Tibial artery (tissue), 4 donors: ENCODE measurements at regions of chr5 and their contacts with region 1.

Region 1: GRCh38 chr5:164610374-164610773 is 1105.0 kb downstream of the MAT2B start:
- DNase-seq: no peak
- H3K4me3 ChIP-seq: no peak overlapping the region
- H3K27ac ChIP-seq: no peak overlapping the region
- H3K4me1 ChIP-seq: no peaks in the 10 kb centered on the region
- H3K27me3 ChIP-seq: no peaks in the 10 kb centered on the region
- CTCF ChIP-seq: no peak

Region 2: DNA sequence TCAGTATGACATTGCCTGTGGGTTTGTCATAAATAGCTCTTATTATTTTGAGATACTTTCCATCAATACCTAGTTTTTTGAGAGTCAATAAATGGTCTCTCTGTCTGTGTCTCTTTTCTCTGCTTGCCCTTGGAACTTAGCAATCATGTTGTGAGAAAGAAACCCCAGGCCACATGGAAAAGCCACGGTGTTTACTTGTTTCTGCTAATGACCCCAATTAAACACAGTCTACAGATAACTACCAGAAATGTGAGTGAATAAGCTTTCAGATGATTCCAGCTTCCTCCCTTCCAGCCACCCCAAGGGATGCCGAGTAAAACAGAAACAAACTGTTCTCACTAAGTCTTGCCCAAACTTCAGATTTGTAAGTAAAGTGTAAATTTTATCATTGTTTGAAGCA is 520.0 kb before region 1 on chr5:
- intact Hi-C with region 1: no loop called
- DNase-seq: no peak
- H3K4me3 ChIP-seq: no peak overlapping the region
- H3K27ac ChIP-seq: no peak overlapping the region
- H3K4me1 ChIP-seq: no peaks in the 10 kb centered on the region
- H3K27me3 ChIP-seq: no peaks in the 10 kb centered on the region
- CTCF ChIP-seq: no peak

Region 3: GRCh38 chr5:166570812-166571211 is 1960.4 kb after region 1 on chr5:
- intact Hi-C with region 1: loop called (anchors 5 kb)
- DNase-seq: no peak
- H3K4me3 ChIP-seq: no peak overlapping the region
- H3K27ac ChIP-seq: no peak overlapping the region
- H3K4me1 ChIP-seq: no peaks in the 10 kb centered on the region
- H3K27me3 ChIP-seq: no peaks in the 10 kb centered on the region
- CTCF ChIP-seq: no peak